ENCODE measurements at regions of chr10 and their contacts with region 1.

Region 1: GRCh38 chr10:114550756-114551635 is 107.1 kb downstream of the ABLIM1 start:
- DNase-seq: no peak
- H3K27ac ChIP-seq: no peak overlapping the region
- CTCF ChIP-seq: peak; percentile 30; the same call in 1 of the 2 replicates

Region 2: DNA sequence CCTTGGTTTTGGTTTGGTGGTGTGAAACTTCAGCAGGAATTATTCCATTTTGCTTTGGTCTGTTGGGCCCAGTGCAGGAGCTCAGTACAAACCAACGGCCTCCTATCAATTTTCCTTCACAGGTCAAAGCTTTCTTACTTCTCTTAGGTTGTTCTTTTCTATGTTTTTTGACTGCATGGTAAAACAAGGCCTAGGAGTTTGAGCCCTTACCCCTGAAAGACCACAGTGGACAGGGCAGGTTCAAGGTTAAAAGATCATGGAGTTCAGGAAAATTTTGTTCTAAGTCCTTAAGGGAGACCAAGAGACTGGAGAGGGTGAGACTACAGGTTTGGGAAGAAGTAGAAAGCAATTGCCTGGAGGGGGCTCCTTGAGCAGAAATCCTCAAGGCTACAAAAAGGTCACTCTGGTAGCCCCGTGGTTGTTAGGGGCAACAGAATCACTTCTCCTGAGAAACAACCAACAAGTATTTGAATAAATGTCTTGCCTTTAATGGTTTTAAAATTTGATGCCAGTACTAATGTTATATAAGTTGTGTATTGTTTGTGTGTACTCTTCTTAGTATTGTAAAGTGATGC is 229.7 kb after region 1 on chr10:
- CTCF ChIA-PET with region 1: interaction called, 14 read pairs
- POLR2A ChIA-PET with region 1: no interaction called
- DNase-seq: no peak
- H3K27ac ChIP-seq: peak overlapping the region; percentile 58
- CTCF ChIP-seq: no peak

Measured in RWPE1 (cell line).